Caco-2 (cell line): ENCODE measurements at regions of chr6 and their contacts with region 1.

Region 1: DNA sequence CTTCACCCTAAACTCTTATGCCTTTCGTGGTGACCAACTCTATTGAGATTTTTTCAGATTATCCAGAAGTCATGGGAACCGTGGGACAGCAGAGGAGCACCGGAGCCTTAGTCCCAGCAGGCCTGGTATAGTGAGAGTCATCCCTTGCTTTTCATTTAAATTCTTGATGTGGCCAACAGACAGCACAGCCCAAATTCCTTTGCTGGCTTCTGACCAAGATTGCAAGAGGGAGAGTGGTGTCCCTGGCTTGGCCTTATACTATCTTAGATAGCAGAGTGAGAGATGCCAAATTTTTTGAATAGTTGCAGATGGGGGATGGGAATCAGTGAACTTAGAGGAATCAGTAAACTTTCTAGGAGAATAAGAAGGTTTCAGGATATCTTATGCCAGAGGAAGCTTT is 7.8 kb downstream of the STX11 start:
- DNase-seq: peak; percentile 54 to 65
- H3K4me3 ChIP-seq: no peak overlapping the region
- H3K4me3 Mint-ChIP-seq: peak overlapping the region; percentile 29
- H3K27ac Mint-ChIP-seq: peak overlapping the region; percentile 37
- H3K4me1 ChIP-seq: peaks cover 23% of the 10 kb centered on the region; the same call in 1 of the 2 replicates
- H3K4me1 Mint-ChIP-seq: peaks cover 31% of the 10 kb centered on the region
- H3K27me3 ChIP-seq: no peaks in the 10 kb centered on the region
- H3K27me3 Mint-ChIP-seq: no peaks in the 10 kb centered on the region
- CTCF ChIP-seq: no peak

Region 2: GRCh38 chr6:144195679-144196270 is 37.6 kb after region 1 on chr6:
- CTCF ChIA-PET with region 1: no interaction called
- POLR2A ChIA-PET with region 1: no interaction called
- intact Hi-C with region 1: loop called (anchors 5 kb)
- DNase-seq: peak in 1 of 2 experiments; percentile 60
- H3K4me3 ChIP-seq: no peak overlapping the region
- H3K4me3 Mint-ChIP-seq: no peak overlapping the region
- H3K27ac Mint-ChIP-seq: peak overlapping the region; percentile 48
- H3K4me1 ChIP-seq: peaks cover 12% of the 10 kb centered on the region
- H3K4me1 Mint-ChIP-seq: peaks cover 6% of the 10 kb centered on the region
- H3K27me3 ChIP-seq: no peaks in the 10 kb centered on the region
- H3K27me3 Mint-ChIP-seq: no peaks in the 10 kb centered on the region
- CTCF ChIP-seq: no peak